CD4-positive, alpha-beta T cell (primary cell): ENCODE measurements at regions of chr11 and their contacts with region 1.

Region 1: GRCh38 chr11:107385361-107385982 is 72.2 kb downstream of the CWF19L2 start:
- DNase-seq: no peak
- ATAC-seq: no peak
- H3K4me3 ChIP-seq: no peak overlapping the region
- H3K4me3 Mint-ChIP-seq: no peak overlapping the region
- H3K27ac ChIP-seq: no peak overlapping the region
- H3K27ac Mint-ChIP-seq: no peak overlapping the region
- H3K4me1 ChIP-seq: peaks cover 2% of the 10 kb centered on the region
- H3K4me1 Mint-ChIP-seq: peaks cover 24% of the 10 kb centered on the region
- H3K27me3 ChIP-seq: no peaks in the 10 kb centered on the region
- H3K27me3 Mint-ChIP-seq: no peaks in the 10 kb centered on the region
- CTCF ChIP-seq: no peak

Region 2: GRCh38 chr11:107357877-107358276 is 27.6 kb before region 1 on chr11:
- CTCF ChIA-PET with region 1: no interaction called
- POLR2A ChIA-PET with region 1: no interaction called
- intact Hi-C with region 1: loop called in 1 of 2 experiments (anchors 1 kb)
- DNase-seq: no peak
- ATAC-seq: no peak
- H3K4me3 ChIP-seq: no peak overlapping the region
- H3K4me3 Mint-ChIP-seq: no peak overlapping the region
- H3K27ac ChIP-seq: no peak overlapping the region
- H3K27ac Mint-ChIP-seq: no peak overlapping the region
- H3K4me1 ChIP-seq: no peaks in the 10 kb centered on the region
- H3K4me1 Mint-ChIP-seq: no peaks in the 10 kb centered on the region
- H3K27me3 ChIP-seq: no peaks in the 10 kb centered on the region
- H3K27me3 Mint-ChIP-seq: no peaks in the 10 kb centered on the region
- CTCF ChIP-seq: no peak